CD14-positive monocyte (primary cell): ENCODE measurements at regions of chr9 and their contacts with region 1.

Region 1: DNA sequence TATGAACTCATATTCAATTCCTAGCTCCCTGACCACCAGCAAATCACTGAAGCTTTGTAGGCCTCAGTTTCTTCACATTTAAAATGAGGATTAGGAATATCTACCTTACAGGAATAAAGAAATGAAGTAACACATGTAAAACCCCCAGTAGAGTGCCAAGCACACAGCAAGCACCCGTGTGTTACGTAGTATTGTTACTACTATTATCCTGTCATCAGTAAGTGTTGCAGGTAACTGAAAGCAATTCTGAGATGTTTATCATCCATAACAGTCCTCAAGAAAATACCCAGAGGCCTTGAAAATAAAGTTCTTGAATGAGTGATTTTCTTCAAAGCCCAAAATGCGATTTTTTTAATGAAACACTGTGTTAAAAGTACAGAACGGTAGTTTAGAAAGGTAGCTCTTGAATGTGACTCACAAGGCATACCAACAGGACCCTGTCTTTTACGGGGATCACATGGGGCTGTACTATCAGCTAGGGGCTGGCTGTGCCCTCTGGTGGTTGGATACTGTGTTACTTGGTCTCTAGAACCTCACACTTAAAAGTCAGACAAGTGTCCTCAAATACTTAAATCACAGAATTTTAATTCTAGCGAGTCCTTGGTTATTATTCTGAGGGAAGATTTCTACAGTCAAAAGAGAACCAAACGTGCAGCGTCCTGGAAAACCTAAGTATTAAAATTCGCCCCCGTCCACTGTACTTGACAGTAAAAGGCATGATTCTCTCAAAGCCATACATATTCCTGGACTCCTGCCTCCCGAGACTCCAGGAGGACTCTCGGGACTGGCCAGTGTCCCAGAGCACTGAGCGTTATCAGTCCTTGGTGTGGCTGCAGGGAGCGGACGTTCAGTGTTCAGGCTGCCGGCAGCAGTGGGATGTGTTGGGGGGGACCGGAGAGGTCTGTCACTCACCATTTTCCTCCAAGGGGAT is 725 bp downstream of the NDUFB6 start:
- DNase-seq: peak; percentile 59 to 83 (median 82)
- H3K4me3 ChIP-seq: peak overlapping the region; percentile 72 to 99 (median 72)
- H3K4me3 Mint-ChIP-seq: peak overlapping the region; percentile 96 to 98
- H3K27ac ChIP-seq: peak overlapping the region; percentile 79 to 86
- H3K27ac Mint-ChIP-seq: peak overlapping the region; percentile 84 to 98 (median 97)
- H3K4me1 ChIP-seq: peaks cover 14 to 24% of the 10 kb centered on the region in 2 donors
- H3K4me1 Mint-ChIP-seq: peaks cover 22% of the 10 kb centered on the region
- H3K27me3 ChIP-seq: no peaks in the 10 kb centered on the region
- H3K27me3 Mint-ChIP-seq: peaks cover 0 to 7% (median 6%) of the 10 kb centered on the region in 3 donors
- CTCF ChIP-seq: peak; percentile 86

Region 2: GRCh38 chr9:32384364-32385151 is 187.7 kb before region 1 on chr9 and contains the start of gene ACO1:
- intact Hi-C with region 1: loop called in 1 of 2 experiments (anchors 2 kb)
- DNase-seq: peak; percentile 70 to 76 (median 71)
- H3K4me3 ChIP-seq: peak within 1 kb of the TSS; percentile 80 to 90 (median 81)
- H3K4me3 Mint-ChIP-seq: peak within 1 kb of the TSS; percentile 88 to 94
- H3K27ac ChIP-seq: peak within 1 kb of the TSS in 1 of 2 donors; percentile 46
- H3K27ac Mint-ChIP-seq: peak within 1 kb of the TSS in 6 of 7 donors; percentile 26 to 84 (median 62)
- H3K4me1 ChIP-seq: peaks cover 13 to 14% of the 10 kb centered on the region in 2 donors
- H3K4me1 Mint-ChIP-seq: peaks cover 20% of the 10 kb centered on the region
- H3K27me3 ChIP-seq: peaks cover 13 to 17% of the 10 kb centered on the region in 2 donors
- H3K27me3 Mint-ChIP-seq: peaks cover 20 to 30% (median 23%) of the 10 kb centered on the region in 3 donors
- CTCF ChIP-seq: no peak
- polyA plus RNA-seq, gene ACO1: 2.9 to 12.5 (median 10.5) TPM

Region 3: DNA sequence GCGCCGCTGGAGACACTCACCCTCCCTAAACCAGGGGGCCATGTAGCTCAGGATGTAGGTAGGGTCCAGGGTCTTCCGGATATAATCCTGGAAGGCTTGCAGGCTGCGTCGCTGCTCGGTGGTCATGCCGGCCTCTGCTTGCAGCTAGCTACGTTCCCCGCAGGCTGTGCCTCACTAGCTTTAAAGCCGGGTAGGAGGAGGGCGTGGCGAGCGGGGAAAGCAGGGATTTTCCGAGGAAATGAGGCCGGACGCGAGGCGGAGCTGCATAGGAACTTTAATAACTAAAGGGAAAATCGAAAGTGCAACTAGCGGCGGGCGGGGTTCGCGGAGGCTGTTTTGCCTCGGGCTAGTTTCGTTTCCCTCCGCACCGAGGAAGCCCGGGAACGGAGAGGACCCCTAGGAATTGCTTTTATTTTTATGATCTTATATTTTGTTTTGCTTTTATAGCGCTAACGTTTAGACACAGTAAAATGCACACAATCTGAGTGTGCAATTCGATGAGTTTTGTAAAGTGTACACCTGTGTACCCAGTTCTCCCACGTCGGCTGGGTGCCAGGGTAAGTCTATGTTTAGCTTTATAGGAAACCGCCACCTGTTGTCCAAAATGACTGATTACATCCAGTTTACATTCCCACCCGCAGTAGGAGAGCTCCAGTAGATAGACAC is 46.1 kb before region 1 on chr9 and contains the start of gene RIGI:
- intact Hi-C with region 1: loop called in 1 of 2 experiments (anchors 10 kb)
- DNase-seq: peak; percentile 75 to 89 (median 79)
- H3K4me3 ChIP-seq: peak within 1 kb of the TSS; percentile 81 to 98 (median 91)
- H3K4me3 Mint-ChIP-seq: peak within 1 kb of the TSS; percentile 96 to 98
- H3K27ac ChIP-seq: peak within 1 kb of the TSS; percentile 76 to 95
- H3K27ac Mint-ChIP-seq: peak within 1 kb of the TSS; percentile 91 to 97 (median 95)
- H3K4me1 ChIP-seq: peaks cover 20 to 29% of the 10 kb centered on the region in 2 donors
- H3K4me1 Mint-ChIP-seq: peaks cover 42% of the 10 kb centered on the region
- H3K27me3 ChIP-seq: no peaks in the 10 kb centered on the region
- H3K27me3 Mint-ChIP-seq: peaks cover 0 to 3% (median 0%) of the 10 kb centered on the region in 3 donors
- CTCF ChIP-seq: peak; percentile 61
- polyA plus RNA-seq, gene RIGI: 7.6 to 14.3 (median 8.9) TPM

Region 4: DNA sequence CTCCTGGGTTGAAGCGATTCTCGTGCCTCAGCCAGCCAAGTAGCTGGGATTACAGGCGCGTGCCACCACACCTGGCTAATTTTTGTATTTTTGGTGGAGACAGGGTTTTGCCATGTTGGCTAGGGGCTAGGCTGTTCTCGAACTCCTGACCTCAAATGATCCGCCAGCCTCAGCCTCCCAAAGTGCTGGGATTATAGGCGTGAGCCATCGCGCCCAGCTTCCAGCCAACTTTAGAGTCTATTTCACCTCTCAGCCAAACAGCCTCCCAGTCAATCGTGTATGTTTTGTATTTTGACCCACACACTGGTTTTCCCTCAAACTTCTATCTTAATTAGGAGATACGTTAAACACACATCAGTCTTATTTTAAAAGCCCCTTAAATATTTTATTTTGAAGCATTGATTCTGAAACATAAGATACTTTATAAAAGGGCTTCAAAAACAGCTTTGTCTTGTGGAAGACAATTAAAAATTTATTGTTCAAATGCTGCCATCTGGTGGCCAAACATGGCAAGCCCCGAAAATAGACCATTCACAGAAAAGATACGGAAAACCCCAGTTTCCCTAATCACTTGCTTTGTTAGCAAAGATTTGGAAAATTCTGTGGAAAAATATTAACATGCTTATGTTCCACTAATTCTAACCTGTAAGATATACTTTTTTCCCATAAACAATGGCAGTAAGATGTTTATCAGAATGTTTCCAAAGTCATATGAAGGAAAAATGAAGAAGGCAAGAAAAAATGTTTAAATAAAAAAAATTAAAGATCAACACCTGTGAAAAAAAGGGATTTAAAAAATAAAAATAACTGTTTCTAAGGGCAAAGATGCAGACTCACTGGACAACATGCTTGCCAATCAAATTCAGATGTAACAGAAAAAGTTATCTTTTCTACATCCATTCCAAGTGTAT is 396.1 kb after region 1 on chr9:
- intact Hi-C with region 1: loop called in 1 of 2 experiments (anchors 10 kb)
- DNase-seq: peak; percentile 15 to 39 (median 30)
- H3K4me3 ChIP-seq: no peak overlapping the region
- H3K4me3 Mint-ChIP-seq: no peak overlapping the region
- H3K27ac ChIP-seq: no peak overlapping the region
- H3K27ac Mint-ChIP-seq: no peak overlapping the region
- H3K4me1 ChIP-seq: no peaks in the 10 kb centered on the region
- H3K4me1 Mint-ChIP-seq: no peaks in the 10 kb centered on the region
- H3K27me3 ChIP-seq: no peaks in the 10 kb centered on the region
- H3K27me3 Mint-ChIP-seq: peaks cover 0 to 4% (median 2%) of the 10 kb centered on the region in 3 donors
- CTCF ChIP-seq: peak; percentile 83

Region 5: GRCh38 chr9:33007755-33008154 is 435.5 kb after region 1 on chr9:
- intact Hi-C with region 1: loop called in 1 of 2 experiments (anchors 5 kb)
- DNase-seq: no peak
- H3K4me3 ChIP-seq: no peak overlapping the region
- H3K4me3 Mint-ChIP-seq: no peak overlapping the region
- H3K27ac ChIP-seq: no peak overlapping the region
- H3K27ac Mint-ChIP-seq: peak overlapping the region in 1 of 7 donors; percentile 59
- H3K4me1 ChIP-seq: peaks cover 12 to 13% of the 10 kb centered on the region in 2 donors
- H3K4me1 Mint-ChIP-seq: peaks cover 10% of the 10 kb centered on the region
- H3K27me3 ChIP-seq: no peaks in the 10 kb centered on the region
- H3K27me3 Mint-ChIP-seq: no peaks in the 10 kb centered on the region
- CTCF ChIP-seq: no peak